ENCODE measurements at regions of chr9 and their contacts with region 1.

Region 1: GRCh38 chr9:127770905-127771569 is 7.4 kb downstream of the SH2D3C start:
- DNase-seq: peak; percentile 94 to 98 (median 98)
- H3K4me3 ChIP-seq: peak overlapping the region; percentile 29 to 80 (median 60)
- H3K4me3 Mint-ChIP-seq: peak overlapping the region; percentile 88 to 91
- H3K27ac ChIP-seq: peak overlapping the region; percentile 51 to 80
- H3K27ac Mint-ChIP-seq: peak overlapping the region; percentile 86 to 94 (median 89)
- H3K4me1 ChIP-seq: peaks cover 68 to 91% of the 10 kb centered on the region in 2 donors
- H3K4me1 Mint-ChIP-seq: peaks cover 83% of the 10 kb centered on the region
- H3K27me3 ChIP-seq: no peaks in the 10 kb centered on the region
- H3K27me3 Mint-ChIP-seq: peaks cover 0 to 3% (median 0%) of the 10 kb centered on the region in 3 donors
- CTCF ChIP-seq: no peak

Region 2: GRCh38 chr9:127568971-127569885 is 201.8 kb before region 1 on chr9:
- intact Hi-C with region 1: loop called in 1 of 2 experiments (anchors 5 kb)
- DNase-seq: peak; percentile 73 to 83 (median 74)
- H3K4me3 ChIP-seq: peak overlapping the region; percentile 72 to 94 (median 74)
- H3K4me3 Mint-ChIP-seq: peak overlapping the region; percentile 81 to 90
- H3K27ac ChIP-seq: peak overlapping the region; percentile 83 to 93
- H3K27ac Mint-ChIP-seq: peak overlapping the region; percentile 90 to 97 (median 96)
- H3K4me1 ChIP-seq: peaks cover 70 to 84% of the 10 kb centered on the region in 2 donors
- H3K4me1 Mint-ChIP-seq: peaks cover 74% of the 10 kb centered on the region
- H3K27me3 ChIP-seq: no peaks in the 10 kb centered on the region
- H3K27me3 Mint-ChIP-seq: no peaks in the 10 kb centered on the region
- CTCF ChIP-seq: no peak

Measured in CD14-positive monocyte (primary cell).